PC-3 (cell line): ENCODE measurements at regions of chr11 and their contacts with region 1.

Region 1: GRCh38 chr11:130646881-130647280 is 198.4 kb downstream of the ADAMTS15 start:
- DNase-seq: no peak
- ATAC-seq: no peak
- H3K4me3 ChIP-seq: no peak overlapping the region
- H3K27ac ChIP-seq: peak overlapping the region; percentile 35
- H3K4me1 ChIP-seq: peaks cover 13% of the 10 kb centered on the region
- H3K27me3 ChIP-seq: no peaks in the 10 kb centered on the region
- CTCF ChIP-seq: no peak

Region 2: DNA sequence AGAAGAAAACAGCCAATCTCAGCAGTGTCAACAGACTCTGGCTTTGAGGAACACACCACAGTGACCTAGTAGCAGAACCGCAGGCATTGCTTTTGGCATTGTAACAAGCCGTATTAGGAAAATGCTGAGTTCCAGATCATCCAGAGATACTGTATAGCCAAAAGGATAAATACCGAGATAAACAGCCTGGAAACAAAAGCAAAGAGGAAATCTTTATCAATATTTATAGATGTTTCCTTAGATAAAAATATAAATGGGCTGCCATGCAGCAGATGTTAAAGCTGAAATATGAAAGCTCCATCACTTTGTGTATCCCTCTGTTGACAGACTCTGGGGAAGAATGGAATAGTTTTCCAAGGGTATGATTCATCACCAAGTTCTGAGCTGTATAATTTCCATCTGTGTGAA is 1605.3 kb before region 1 on chr11:
- CTCF ChIA-PET with region 1: no interaction called
- POLR2A ChIA-PET with region 1: interaction called, 14 read pairs
- intact Hi-C with region 1: no loop called
- DNase-seq: no peak
- ATAC-seq: no peak; the same call in 1 of the 2 replicates
- H3K4me3 ChIP-seq: no peak overlapping the region
- H3K27ac ChIP-seq: no peak overlapping the region
- H3K4me1 ChIP-seq: no peaks in the 10 kb centered on the region
- H3K27me3 ChIP-seq: no peaks in the 10 kb centered on the region
- CTCF ChIP-seq: no peak

Region 3: GRCh38 chr11:130666781-130667251 is 19.9 kb after region 1 on chr11:
- CTCF ChIA-PET with region 1: no interaction called
- POLR2A ChIA-PET with region 1: no interaction called
- intact Hi-C with region 1: no loop called
- DNase-seq: peak; percentile 36
- ATAC-seq: peak; percentile 77
- H3K4me3 ChIP-seq: no peak overlapping the region
- H3K27ac ChIP-seq: peak overlapping the region; percentile 9; the same call in 1 of the 2 replicates
- H3K4me1 ChIP-seq: peaks cover 9% of the 10 kb centered on the region
- H3K27me3 ChIP-seq: no peaks in the 10 kb centered on the region
- CTCF ChIP-seq: peak; percentile 36

Region 4: DNA sequence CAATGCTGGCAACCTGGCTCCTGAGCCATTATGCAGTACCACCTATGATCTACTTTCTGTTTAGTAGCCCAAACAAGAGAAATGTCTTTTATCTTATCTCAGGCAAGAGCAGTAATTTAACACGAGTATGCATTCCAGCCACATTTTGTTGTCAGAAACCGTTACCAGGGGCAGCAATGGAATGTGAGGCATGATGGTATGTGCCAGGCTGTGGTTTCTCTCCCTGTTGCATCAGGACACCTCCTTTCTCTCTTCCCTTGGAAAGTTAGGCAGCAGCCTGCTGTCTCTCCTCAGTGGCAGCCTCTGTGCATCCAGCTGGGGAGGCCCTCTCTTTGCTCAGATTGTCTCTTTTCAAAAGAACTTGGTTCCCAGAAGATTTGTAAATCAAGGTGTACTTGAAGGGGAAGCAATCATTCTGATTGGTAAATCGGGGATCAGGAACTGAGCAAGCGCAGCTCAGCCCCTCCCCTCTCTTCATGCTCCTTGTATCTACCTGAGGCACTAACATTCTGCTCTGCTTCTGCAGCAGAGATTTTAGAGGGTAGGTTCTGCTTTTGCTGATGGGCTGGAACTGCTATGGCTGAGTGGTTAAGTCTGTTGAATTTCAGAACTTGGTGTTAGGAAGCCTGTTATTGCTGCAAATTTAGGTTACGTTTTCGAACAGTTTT is 30.7 kb after region 1 on chr11:
- CTCF ChIA-PET with region 1: no interaction called
- POLR2A ChIA-PET with region 1: no interaction called
- intact Hi-C with region 1: no loop called
- DNase-seq: peak; percentile 57
- ATAC-seq: peak; percentile 35; the same call in 1 of the 2 replicates
- H3K4me3 ChIP-seq: no peak overlapping the region
- H3K27ac ChIP-seq: no peak overlapping the region
- H3K4me1 ChIP-seq: peaks cover 9% of the 10 kb centered on the region; the same call in 1 of the 2 replicates
- H3K27me3 ChIP-seq: no peaks in the 10 kb centered on the region
- CTCF ChIP-seq: no peak